IMR-90 (cell line): ENCODE measurements at regions of chr10 and their contacts with region 1.

Region 1: DNA sequence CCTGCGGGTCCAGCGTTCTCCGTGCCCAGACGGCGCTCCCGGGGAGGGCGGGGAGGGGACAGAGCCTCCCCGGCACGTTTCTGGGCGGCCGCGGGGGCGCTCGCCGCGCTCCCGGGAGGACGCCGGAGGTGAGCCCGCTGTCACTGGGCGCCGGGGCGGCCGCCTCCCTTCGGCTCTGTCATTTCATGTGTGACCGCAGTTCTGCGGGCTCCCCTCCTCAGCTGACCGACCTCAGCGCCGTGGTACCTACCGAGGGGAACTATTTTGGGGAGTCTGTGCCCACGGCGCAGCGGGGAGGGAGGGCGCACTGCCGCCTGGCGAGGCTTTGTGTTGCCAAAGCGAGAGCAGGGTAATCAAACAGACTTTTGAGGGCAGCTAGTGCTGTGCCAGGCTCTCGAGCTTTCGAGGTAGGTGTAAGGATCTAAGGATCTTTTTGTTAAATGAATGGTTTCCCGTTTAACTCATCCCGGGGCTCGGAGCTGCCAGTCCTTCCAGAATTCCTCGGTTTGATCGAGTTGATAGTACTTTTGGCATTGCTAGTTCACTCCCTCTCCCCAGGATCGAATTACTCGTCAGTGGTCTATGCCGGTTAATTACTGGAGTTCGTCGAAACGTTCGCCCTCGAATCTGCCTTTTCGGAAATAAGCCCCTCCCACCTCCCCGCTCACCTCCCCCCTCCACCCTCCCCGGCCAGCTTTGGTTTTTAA is 1.9 kb downstream of the ARID5B start:
- DNase-seq: peak; percentile 55
- ATAC-seq: peak; percentile 43
- H3K4me3 ChIP-seq: peak overlapping the region; percentile 60
- H3K27ac ChIP-seq: peak overlapping the region; percentile 99
- H3K4me1 ChIP-seq: peaks cover 4% of the 10 kb centered on the region; the same call in 1 of the 2 replicates
- H3K27me3 ChIP-seq: no peaks in the 10 kb centered on the region
- CTCF ChIP-seq: 0 out of 2 replicates have a peak, but pooled peaks have one; percentile 11
- POLR2A ChIP-seq: no peak
- RAD21 ChIP-seq: peak; percentile 1; the same call in 1 of the 2 replicates

Region 2: DNA sequence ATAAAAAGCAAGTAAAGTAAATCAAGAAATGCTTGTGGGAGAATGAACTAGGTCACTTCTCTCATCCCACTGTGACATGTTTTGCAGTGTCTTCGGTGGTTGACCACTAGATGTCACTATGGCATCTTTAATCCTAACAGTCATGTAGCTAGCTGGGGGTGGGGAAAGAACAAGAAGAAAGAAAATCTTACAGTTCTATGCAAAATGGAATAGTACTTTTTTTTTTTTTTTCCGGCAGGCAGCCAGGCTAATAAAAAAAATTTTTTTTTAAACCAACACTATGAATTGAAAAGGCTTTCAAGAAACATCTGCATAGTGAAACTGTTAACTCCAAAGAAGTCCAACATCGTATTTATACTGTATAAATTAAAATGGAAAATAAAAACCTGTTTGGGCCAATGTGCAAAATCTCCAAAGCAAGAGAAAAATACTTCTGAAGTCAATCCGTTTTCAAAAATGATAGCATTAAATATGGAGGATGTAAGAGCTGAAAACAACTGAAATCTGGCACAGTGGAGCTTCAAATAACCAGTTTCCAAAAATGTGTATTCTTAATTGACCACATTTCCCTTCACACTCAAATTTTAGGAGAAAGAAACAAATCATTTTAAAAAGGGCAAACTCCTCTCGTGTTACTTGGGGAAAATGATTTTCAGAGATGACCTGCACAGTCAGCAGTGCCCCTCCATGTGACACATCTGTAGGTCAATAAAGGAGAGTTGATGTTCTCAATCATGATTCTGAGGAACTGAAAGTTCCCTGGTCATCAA is 1086.6 kb before region 1 on chr10:
- CTCF ChIA-PET with region 1: no interaction called
- POLR2A ChIA-PET with region 1: no interaction called
- dilution Hi-C with region 1: no loop called
- in situ Hi-C with region 1: no loop called
- intact Hi-C with region 1: loop called (anchors 5 kb)
- DNase-seq: peak; percentile 90
- ATAC-seq: peak; percentile 91
- H3K4me3 ChIP-seq: no peak overlapping the region
- H3K27ac ChIP-seq: no peak overlapping the region
- H3K4me1 ChIP-seq: peaks cover 13% of the 10 kb centered on the region
- H3K27me3 ChIP-seq: no peaks in the 10 kb centered on the region
- CTCF ChIP-seq: peak; percentile 91
- POLR2A ChIP-seq: peak; percentile 44; the same call in 1 of the 2 replicates
- RAD21 ChIP-seq: peak; percentile 94

Region 3: DNA sequence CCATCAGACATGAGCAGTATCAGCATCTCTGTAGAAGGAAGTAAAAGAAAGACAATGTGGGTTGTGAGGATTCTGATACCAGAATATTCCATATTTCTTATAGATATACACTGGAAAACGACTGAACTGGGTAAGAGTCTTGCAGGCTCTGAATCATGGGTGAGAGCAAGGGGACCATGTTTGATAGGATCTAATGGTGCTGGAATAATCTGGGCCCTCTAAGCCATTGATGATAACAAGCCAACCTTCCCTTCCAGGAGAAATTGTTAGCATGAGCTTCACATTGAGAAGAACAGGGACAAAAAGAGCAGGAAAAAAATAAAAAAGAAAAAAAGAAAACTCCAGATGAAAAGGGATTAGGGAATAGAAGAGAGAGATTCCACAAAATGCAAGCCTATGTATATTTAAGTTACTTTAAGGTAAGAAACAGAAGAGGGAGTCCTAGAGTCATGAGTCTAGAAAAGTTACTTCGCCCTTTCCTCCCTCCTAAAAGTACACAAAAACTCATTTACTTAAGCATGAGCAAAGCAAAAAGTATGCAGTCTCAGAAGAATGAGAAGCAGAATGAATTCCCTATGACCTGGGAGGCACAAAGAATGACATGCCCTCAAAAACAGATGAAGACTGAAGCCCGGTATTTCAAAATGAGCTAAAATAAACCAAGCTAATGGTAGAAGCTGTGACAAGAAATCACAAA is 632.1 kb before region 1 on chr10:
- CTCF ChIA-PET with region 1: no interaction called
- POLR2A ChIA-PET with region 1: no interaction called
- dilution Hi-C with region 1: no loop called
- in situ Hi-C with region 1: no loop called
- intact Hi-C with region 1: loop called (anchors 10 kb)
- DNase-seq: peak; percentile 84
- ATAC-seq: peak; percentile 98
- H3K4me3 ChIP-seq: no peak overlapping the region
- H3K27ac ChIP-seq: peak overlapping the region; percentile 66
- H3K4me1 ChIP-seq: 0 out of 2 replicates have a peak, but pooled peaks cover 2% of the 10 kb centered on the region
- H3K27me3 ChIP-seq: no peaks in the 10 kb centered on the region
- CTCF ChIP-seq: peak; percentile 55
- POLR2A ChIP-seq: no peak
- RAD21 ChIP-seq: peak; percentile 39

Region 4: GRCh38 chr10:61733358-61733940 is 169.9 kb before region 1 on chr10:
- CTCF ChIA-PET with region 1: interaction called, 4 read pairs
- POLR2A ChIA-PET with region 1: no interaction called
- dilution Hi-C with region 1: no loop called
- in situ Hi-C with region 1: no loop called
- intact Hi-C with region 1: loop called (anchors 5 kb)
- DNase-seq: peak; percentile 64
- ATAC-seq: peak; percentile 54; the same call in 1 of the 2 replicates
- H3K4me3 ChIP-seq: no peak overlapping the region
- H3K27ac ChIP-seq: no peak overlapping the region
- H3K4me1 ChIP-seq: no peaks in the 10 kb centered on the region
- H3K27me3 ChIP-seq: no peaks in the 10 kb centered on the region
- CTCF ChIP-seq: peak; percentile 72
- POLR2A ChIP-seq: 0 out of 2 replicates have a peak, but pooled peaks have one; percentile 22
- RAD21 ChIP-seq: peak; percentile 79

Region 5: GRCh38 chr10:61835069-61835945 is 68.1 kb before region 1 on chr10:
- CTCF ChIA-PET with region 1: no interaction called
- POLR2A ChIA-PET with region 1: interaction called, 5 read pairs
- dilution Hi-C with region 1: no loop called
- in situ Hi-C with region 1: no loop called
- intact Hi-C with region 1: loop called (anchors 1 kb)
- DNase-seq: peak; percentile 78
- ATAC-seq: peak; percentile 59
- H3K4me3 ChIP-seq: no peak overlapping the region
- H3K27ac ChIP-seq: peak overlapping the region; percentile 39; the same call in 1 of the 2 replicates
- H3K4me1 ChIP-seq: peaks cover 14% of the 10 kb centered on the region
- H3K27me3 ChIP-seq: no peaks in the 10 kb centered on the region
- CTCF ChIP-seq: peak; percentile 50
- POLR2A ChIP-seq: no peak
- RAD21 ChIP-seq: peak; percentile 62

Region 6: DNA sequence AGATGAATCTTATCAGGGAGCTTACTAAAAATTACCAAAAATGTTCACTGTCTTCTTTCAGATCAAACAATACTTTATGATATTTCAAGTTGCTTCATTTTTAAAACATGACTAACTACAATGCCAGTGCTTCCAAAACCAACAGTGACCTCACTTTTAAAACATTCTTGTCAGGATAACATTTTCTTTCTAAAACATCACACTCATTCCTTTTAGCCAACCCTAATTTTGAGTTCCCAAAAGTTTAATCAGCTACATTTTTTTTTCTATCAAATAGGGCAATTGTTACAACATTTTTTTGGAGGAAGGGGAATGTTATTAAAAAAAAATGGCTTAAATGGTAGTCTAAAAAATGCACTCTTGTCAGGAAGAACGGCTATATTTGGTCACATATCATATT is 328.0 kb after region 1 on chr10:
- CTCF ChIA-PET with region 1: no interaction called
- POLR2A ChIA-PET with region 1: interaction called, 5 read pairs
- dilution Hi-C with region 1: no loop called
- in situ Hi-C with region 1: loop called (anchors 10 kb)
- intact Hi-C with region 1: no loop called
- DNase-seq: peak; percentile 92
- ATAC-seq: peak; percentile 56
- H3K4me3 ChIP-seq: no peak overlapping the region
- H3K27ac ChIP-seq: peak overlapping the region; percentile 100; the same call in 1 of the 2 replicates
- H3K4me1 ChIP-seq: peaks cover 20% of the 10 kb centered on the region
- H3K27me3 ChIP-seq: no peaks in the 10 kb centered on the region
- CTCF ChIP-seq: no peak
- POLR2A ChIP-seq: no peak
- RAD21 ChIP-seq: no peak